ENCODE measurements at regions of chr6 and their contacts with region 1.

Region 1: GRCh38 chr6:79777713-79778579 is 146.8 kb downstream of the SH3BGRL2 start:
- H3K4me3 ChIP-seq: peak overlapping the region; percentile 20
- H3K27ac ChIP-seq: no peak overlapping the region
- H3K4me1 ChIP-seq: no peaks in the 10 kb centered on the region
- CTCF ChIP-seq: peak; percentile 93

Region 2: GRCh38 chr6:79269877-79270276 is 508.1 kb before region 1 on chr6:
- CTCF ChIA-PET with region 1: no interaction called
- POLR2A ChIA-PET with region 1: no interaction called
- H3K4me3 ChIP-seq: no peak overlapping the region
- H3K27ac ChIP-seq: no peak overlapping the region
- H3K4me1 ChIP-seq: no peaks in the 10 kb centered on the region
- CTCF ChIP-seq: no peak

Region 3: DNA sequence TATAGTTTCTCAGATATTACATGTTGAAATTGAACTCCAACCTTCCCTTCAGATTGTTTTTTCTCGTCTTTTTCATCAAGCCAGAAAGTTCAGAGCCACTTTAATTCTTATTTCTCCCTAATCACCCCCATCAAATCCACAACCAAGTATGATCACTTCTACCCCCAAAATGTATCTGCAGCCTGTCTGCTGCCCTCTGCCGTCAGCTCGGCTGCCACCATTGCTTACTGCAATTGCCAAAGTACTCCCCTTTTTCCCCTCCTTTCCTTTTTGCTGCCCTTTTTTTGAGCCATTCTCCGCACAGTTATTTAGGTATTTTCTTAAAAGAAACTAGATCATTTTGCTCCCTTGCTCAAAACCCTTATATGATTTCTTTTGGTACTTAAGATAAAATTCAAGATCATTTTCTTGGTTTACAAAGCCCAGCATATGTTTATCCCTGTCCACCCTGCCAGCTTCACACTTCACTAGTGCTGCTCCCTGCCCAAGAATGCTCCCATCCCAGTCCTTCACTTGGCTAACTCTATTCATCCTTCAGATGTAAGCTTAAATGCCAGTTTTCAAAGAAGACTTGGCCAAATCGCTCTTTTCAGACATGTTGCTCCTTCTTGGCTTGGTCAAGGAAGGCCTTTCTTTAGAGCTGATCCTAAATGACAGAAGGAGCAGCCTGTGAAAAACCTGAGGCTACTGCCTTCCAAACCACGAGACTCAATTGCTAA is 83.2 kb before region 1 on chr6:
- CTCF ChIA-PET with region 1: no interaction called
- POLR2A ChIA-PET with region 1: no interaction called
- H3K4me3 ChIP-seq: no peak overlapping the region
- H3K27ac ChIP-seq: no peak overlapping the region
- H3K4me1 ChIP-seq: no peaks in the 10 kb centered on the region
- CTCF ChIP-seq: no peak

Region 4: DNA sequence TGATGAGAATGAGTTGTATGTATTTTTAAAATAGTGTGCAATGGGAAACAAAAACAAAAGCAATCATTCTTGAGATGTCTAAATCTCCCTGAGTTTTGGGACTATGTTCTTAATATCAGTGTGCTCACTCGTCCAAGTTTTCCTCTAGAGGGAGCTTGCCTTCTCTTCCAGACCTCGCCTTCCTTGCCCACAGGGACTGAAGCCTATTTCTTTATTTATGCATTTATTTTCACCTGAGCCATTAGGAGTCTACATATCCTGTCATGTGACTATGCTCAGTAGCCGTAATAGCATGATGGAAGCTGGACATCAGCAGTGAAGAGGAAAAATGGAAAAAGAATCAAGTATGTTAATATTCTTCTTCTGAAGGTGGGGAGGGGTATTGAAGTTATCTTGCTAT is 15.6 kb before region 1 on chr6:
- CTCF ChIA-PET with region 1: interaction called, 16 read pairs
- POLR2A ChIA-PET with region 1: no interaction called
- H3K4me3 ChIP-seq: no peak overlapping the region
- H3K27ac ChIP-seq: no peak overlapping the region
- H3K4me1 ChIP-seq: no peaks in the 10 kb centered on the region
- CTCF ChIP-seq: no peak

Region 5: DNA sequence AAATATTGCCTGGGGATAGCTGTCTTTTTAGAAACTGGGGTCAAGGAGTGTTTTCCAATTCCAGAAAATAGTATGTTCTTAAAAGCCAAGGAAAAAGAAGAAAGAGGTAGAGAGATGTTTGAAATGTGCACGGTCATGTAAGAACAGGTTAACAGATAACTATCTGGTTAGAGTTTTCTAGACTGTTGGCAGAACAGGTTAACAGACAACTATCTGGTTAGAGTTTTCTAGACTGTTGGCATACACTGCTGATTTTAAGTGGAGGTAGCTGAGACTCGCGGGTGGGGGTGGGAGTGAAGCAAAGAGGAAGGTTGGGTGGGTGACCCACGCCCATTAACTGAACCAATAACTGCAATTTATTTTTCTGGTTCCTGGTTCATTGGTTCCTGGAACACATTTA is 11.9 kb after region 1 on chr6:
- CTCF ChIA-PET with region 1: interaction called, 18 read pairs
- POLR2A ChIA-PET with region 1: no interaction called
- H3K4me3 ChIP-seq: no peak overlapping the region
- H3K27ac ChIP-seq: no peak overlapping the region
- H3K4me1 ChIP-seq: no peaks in the 10 kb centered on the region
- CTCF ChIP-seq: no peak

Region 6: GRCh38 chr6:79922018-79922417 is 144.1 kb after region 1 on chr6:
- CTCF ChIA-PET with region 1: no interaction called
- POLR2A ChIA-PET with region 1: no interaction called
- H3K4me3 ChIP-seq: no peak overlapping the region
- H3K27ac ChIP-seq: no peak overlapping the region; the same call in 1 of the 2 replicates
- H3K4me1 ChIP-seq: peaks cover 16% of the 10 kb centered on the region
- CTCF ChIP-seq: no peak

Region 7: GRCh38 chr6:80022803-80023202 is 244.9 kb after region 1 on chr6:
- CTCF ChIA-PET with region 1: no interaction called
- POLR2A ChIA-PET with region 1: no interaction called
- H3K4me3 ChIP-seq: no peak overlapping the region
- H3K27ac ChIP-seq: no peak overlapping the region
- H3K4me1 ChIP-seq: no peaks in the 10 kb centered on the region
- CTCF ChIP-seq: no peak